ENCODE measurements at regions of chr20 and their contacts with region 1.

Region 1: DNA sequence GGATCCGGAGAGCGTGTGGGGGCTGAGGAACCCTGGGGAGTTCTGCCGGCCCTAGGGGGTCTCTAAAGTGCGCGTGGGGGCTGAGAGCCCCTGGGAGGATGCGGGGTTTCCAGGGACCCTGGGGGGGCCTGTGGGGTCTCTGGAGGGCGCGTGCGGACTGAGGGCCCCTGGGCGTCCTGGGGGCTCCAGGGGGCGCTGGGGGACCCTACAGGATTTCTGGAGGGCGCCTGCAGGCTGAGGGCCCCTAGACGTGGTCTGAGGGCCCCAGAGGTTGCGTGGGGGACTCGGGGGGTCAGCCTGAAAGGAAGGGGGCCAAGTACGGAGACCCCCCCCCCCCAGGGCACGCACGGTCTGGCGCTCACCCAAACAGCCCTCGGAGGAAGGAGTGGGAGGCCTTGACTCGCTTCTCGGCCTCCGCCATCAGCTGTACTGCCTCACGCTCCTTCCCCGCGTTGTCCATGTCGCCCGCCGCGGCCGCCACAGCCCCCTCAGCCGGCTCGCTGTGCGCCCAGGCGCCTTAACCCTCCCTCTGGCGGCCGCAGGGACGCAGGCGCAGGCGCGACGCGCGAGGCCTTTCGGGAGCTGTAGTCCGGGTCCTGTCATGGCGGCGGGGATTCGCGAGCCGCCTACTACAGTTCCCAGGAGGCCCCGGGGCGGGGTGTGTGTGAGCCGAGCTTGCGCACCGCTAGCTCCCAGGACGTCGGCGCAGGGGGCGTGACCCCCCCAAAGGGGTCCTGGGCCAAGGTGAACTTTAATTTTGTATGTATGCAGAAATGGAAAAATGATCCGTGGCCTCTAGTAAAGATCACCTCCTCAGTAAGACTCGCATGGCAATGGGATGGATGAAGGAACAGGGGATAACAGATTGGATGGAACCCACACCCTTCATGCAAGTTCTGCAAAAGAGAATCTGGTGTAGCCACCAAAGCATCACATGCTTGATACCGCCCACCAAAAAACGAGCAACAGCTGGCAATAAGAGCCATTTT is at the start of gene NAPB:
- DNase-seq: peak; percentile 94
- ATAC-seq: peak; percentile 98
- H3K4me3 Mint-ChIP-seq: peak within 1 kb of the TSS; percentile 97
- H3K27ac Mint-ChIP-seq: peak within 1 kb of the TSS; percentile 86
- H3K4me1 Mint-ChIP-seq: peaks cover 54% of the 10 kb centered on the region
- H3K27me3 Mint-ChIP-seq: peaks cover 2% of the 10 kb centered on the region
- total RNA-seq, gene NAPB: 18.1 to 20.7 TPM

Region 2: DNA sequence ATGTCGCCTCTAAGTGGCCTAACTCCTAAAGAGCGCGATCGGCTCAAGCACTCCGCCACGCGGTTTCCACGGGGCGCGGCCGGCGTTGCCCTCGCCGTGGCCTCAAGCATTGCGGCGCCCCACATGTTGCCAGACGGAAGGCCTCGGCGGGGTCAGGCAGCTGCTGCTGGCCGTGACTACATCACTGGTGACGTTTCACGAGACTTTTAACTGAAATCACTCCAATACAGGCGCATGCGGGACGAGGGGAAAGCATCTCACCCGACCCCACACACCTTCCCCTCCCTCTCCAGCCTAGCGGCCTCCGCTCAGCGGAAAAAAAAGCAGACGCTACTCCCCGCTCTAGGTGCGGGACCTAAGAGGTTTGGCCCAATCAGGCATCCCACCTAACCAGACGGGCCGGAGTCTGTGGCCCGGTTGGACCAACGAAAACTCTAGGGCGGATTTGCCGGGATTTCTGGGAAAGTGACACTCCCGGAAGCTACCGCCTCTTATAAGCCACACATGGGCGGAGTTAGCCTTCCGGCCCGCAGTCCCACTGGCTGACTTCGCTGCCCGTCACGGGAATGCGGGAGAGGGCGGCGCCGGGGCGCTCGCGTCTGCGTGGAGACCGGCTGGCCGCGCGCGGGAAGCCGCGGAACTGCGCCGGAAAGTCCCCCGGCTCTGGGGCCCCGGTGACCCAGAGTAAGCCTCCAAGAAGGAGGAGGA is 70.9 kb before region 1 on chr20 and contains the start of gene NXT1:
- POLR2A ChIA-PET with region 1: interaction called, 72 read pairs
- DNase-seq: peak; percentile 95
- ATAC-seq: peak; percentile 81
- H3K4me3 Mint-ChIP-seq: peak within 1 kb of the TSS; percentile 86
- H3K27ac Mint-ChIP-seq: peak within 1 kb of the TSS; percentile 99
- H3K4me1 Mint-ChIP-seq: peaks cover 16% of the 10 kb centered on the region
- H3K27me3 Mint-ChIP-seq: no peaks in the 10 kb centered on the region
- total RNA-seq, gene NXT1: 29.9 to 31.9 TPM

Region 3: DNA sequence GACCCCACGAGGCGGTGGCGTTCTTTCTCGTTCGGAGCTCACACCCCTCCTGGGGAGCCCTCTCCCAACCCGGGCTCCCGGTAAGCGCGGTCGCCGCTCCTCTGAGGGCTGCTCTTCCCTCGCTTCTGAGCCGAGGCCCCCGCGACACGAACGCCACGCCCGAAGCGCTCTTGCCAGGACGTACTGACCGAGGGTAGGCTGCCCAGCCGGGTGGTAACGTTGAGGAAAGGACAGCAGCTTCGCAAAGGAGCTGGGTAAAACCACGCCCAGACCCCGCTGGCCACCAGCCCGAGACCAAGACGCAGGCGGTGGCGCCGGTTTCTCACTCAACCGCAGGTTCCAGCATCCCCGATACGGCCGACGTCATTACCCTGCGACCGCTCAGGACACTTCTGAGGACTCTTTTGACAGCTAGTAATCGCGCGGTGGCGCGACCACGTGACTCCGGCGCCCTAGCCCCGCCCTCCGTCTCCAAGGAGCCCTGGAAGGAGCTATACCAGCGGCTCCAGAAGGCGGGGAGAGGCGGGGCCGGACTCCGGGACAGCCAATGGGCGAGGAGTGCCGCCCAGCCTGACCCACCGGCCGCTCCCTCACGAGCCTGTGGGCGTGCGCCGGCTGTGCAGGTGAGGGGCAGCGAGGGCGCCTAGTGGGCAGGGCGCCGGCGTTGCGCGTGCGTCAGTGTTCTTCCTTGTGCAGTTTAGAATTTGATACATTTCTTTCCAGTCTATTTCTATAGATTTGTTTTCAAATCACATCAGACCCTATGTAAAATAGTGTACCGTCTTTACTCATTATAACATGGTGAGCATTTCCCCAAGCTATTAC is 63.3 kb before region 1 on chr20:
- POLR2A ChIA-PET with region 1: interaction called, 33 read pairs
- DNase-seq: peak; percentile 99
- ATAC-seq: peak; percentile 82
- H3K4me3 Mint-ChIP-seq: peak overlapping the region; percentile 90
- H3K27ac Mint-ChIP-seq: peak overlapping the region; percentile 96
- H3K4me1 Mint-ChIP-seq: peaks cover 11% of the 10 kb centered on the region
- H3K27me3 Mint-ChIP-seq: no peaks in the 10 kb centered on the region

Region 4: GRCh38 chr20:23461180-23461579 is 39.9 kb after region 1 on chr20:
- POLR2A ChIA-PET with region 1: no interaction called
- DNase-seq: no peak
- ATAC-seq: no peak
- H3K4me3 Mint-ChIP-seq: no peak overlapping the region
- H3K27ac Mint-ChIP-seq: no peak overlapping the region
- H3K4me1 Mint-ChIP-seq: peaks cover 11% of the 10 kb centered on the region
- H3K27me3 Mint-ChIP-seq: peaks cover 5% of the 10 kb centered on the region

Region 5: GRCh38 chr20:23477223-23477622 is 56.0 kb after region 1 on chr20:
- POLR2A ChIA-PET with region 1: no interaction called
- DNase-seq: no peak
- ATAC-seq: no peak
- H3K4me3 Mint-ChIP-seq: no peak overlapping the region
- H3K27ac Mint-ChIP-seq: no peak overlapping the region
- H3K4me1 Mint-ChIP-seq: no peaks in the 10 kb centered on the region
- H3K27me3 Mint-ChIP-seq: peaks cover 4% of the 10 kb centered on the region

Region 6: DNA sequence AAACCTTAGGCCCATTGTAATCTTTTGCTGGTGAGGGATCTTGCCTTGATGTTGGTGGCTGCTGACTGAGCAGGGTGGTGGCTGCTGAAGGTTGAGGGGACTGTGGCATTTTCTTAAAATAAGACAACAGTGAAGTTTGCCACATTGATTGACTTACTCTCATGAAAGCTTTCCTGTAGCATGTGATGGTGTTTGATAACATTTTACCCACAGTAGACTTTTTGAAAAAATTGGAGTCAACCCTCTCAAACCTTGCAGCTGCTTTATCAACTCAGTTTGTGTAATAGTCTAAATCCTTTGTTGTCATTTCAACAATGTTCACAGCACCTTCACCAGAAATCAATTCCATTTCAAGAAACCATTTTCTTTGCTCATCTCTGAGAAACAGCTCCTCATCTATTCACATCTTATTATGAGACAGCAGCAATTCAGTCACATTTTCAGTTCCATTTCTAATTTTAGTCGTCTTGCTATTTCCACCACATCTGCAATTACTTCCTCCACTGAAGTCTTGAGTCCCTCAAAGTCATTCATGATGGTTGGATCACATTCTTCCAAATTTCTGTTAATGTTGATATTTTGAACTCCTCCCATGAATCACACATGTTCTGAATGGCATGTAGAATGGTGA is 109.8 kb after region 1 on chr20:
- POLR2A ChIA-PET with region 1: no interaction called
- DNase-seq: no peak
- ATAC-seq: no peak
- H3K4me3 Mint-ChIP-seq: no peak overlapping the region
- H3K27ac Mint-ChIP-seq: no peak overlapping the region
- H3K4me1 Mint-ChIP-seq: no peaks in the 10 kb centered on the region
- H3K27me3 Mint-ChIP-seq: no peaks in the 10 kb centered on the region

Region 7: DNA sequence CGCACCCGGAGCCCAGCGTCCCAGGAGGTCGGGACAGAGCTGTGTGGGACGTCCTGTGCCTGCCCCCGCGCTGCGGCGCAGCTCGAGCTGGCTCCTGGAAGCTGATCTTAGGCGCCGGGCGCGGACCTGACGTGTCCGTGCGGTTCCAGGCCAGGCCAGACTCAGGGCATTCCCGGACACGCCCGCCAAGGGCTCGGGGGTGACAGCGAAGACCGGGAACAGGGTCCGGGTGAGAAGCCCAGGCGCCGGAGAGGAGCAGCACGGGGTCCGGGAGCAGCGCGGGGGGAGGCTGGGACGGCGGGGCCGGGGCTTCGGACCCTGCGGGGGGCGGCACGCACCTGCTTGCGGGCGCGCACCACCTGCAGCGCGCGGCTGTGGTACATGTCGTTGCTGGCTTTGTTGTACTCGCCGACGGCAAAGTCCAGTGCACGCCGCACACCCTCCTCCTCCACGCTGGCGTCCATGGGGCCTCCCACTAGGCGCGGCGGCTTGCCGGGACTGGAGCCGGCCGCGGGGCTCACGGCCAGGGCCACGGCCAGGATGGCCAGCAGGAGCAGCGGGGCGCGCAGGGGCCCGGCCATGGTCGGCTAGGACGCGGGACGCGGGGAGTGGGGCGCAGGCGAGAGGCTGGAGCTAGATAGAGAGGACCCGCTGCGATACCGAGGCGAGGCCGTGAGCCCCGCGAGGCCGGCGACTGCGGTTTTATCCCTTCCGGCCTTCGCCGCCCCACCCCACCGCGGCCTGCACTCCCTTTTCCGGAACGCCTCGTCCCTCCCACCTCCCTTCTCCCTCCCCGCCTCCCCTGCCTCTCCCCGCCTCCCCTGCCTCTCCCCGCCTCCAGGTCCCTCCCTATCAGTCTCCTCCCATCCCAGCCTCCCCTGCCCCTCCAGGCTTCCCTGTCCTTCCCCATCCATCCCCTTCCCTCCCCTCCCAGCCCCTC is 216.3 kb after region 1 on chr20 and contains the start of gene CST3:
- POLR2A ChIA-PET with region 1: no interaction called
- DNase-seq: peak; percentile 45
- ATAC-seq: peak; percentile 51
- H3K4me3 Mint-ChIP-seq: peak within 1 kb of the TSS; percentile 58
- H3K27ac Mint-ChIP-seq: no peak within 1 kb of the TSS
- H3K4me1 Mint-ChIP-seq: no peaks in the 10 kb centered on the region
- H3K27me3 Mint-ChIP-seq: peaks cover 29% of the 10 kb centered on the region
- total RNA-seq, gene CST3: 5.9 to 8.5 TPM

Measured in activated naive CD8-positive, alpha-beta T cell treated with anti-CD3 and anti-CD28 coated beads, Interleukin-2, amount 10 ng/mL, durations not matched to agents 7 days and 5 days (primary cell).